Activated naive CD4-positive, alpha-beta T cell treated with anti-CD3 and anti-CD28 coated beads for 36 hours (primary cell): ENCODE measurements at regions of chr5 and their contacts with region 1.

Region 1: DNA sequence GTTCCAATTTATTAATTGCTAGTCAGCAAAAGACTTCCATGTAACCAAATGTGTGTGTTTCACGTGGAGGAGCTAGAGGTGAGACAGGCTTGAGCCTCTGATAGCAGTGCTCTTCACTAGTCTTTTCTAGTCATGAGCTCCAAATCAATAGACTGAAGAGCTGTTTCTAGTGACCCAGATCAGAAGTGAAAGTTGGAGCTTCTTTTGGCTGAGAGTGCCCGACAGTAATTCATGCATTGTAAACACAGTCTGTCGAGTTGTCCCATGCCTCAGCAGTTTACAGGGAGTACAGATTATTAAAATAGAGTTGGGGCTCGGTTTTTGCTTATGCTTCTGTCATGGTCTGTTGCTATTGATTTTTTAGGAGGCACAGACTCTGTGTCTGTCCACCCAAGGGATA is 793.1 kb downstream of the DTWD2 start:
- DNase-seq: no peak
- H3K4me3 Mint-ChIP-seq: no peak overlapping the region
- H3K27ac Mint-ChIP-seq: no peak overlapping the region
- H3K4me1 Mint-ChIP-seq: no peaks in the 10 kb centered on the region
- H3K27me3 Mint-ChIP-seq: no peaks in the 10 kb centered on the region

Region 2: GRCh38 chr5:118208031-118208453 is 12.8 kb after region 1 on chr5:
- CTCF ChIA-PET with region 1: no interaction called
- intact Hi-C with region 1: loop called (anchors 1 kb)
- DNase-seq: no peak
- H3K4me3 Mint-ChIP-seq: no peak overlapping the region
- H3K27ac Mint-ChIP-seq: no peak overlapping the region
- H3K4me1 Mint-ChIP-seq: no peaks in the 10 kb centered on the region
- H3K27me3 Mint-ChIP-seq: no peaks in the 10 kb centered on the region

Region 3: GRCh38 chr5:118392491-118392890 is 197.3 kb after region 1 on chr5:
- CTCF ChIA-PET with region 1: no interaction called
- intact Hi-C with region 1: no loop called
- DNase-seq: no peak
- H3K4me3 Mint-ChIP-seq: no peak overlapping the region
- H3K27ac Mint-ChIP-seq: no peak overlapping the region
- H3K4me1 Mint-ChIP-seq: no peaks in the 10 kb centered on the region
- H3K27me3 Mint-ChIP-seq: no peaks in the 10 kb centered on the region

Region 4: GRCh38 chr5:118762291-118762690 is 567.1 kb after region 1 on chr5:
- CTCF ChIA-PET with region 1: no interaction called
- intact Hi-C with region 1: no loop called
- DNase-seq: no peak
- H3K4me3 Mint-ChIP-seq: no peak overlapping the region
- H3K27ac Mint-ChIP-seq: no peak overlapping the region
- H3K4me1 Mint-ChIP-seq: no peaks in the 10 kb centered on the region
- H3K27me3 Mint-ChIP-seq: no peaks in the 10 kb centered on the region